Activated CD4-positive, alpha-beta memory T cell treated with anti-CD3 and anti-CD28 coated beads for 36 hours (primary cell): ENCODE measurements at regions of chr3 and their contacts with region 1.

Region 1: GRCh38 chr3:58358092-58358491 is 25.4 kb downstream of the PXK start:
- DNase-seq: peak; percentile 44
- H3K4me3 Mint-ChIP-seq: no peak overlapping the region
- H3K27ac Mint-ChIP-seq: no peak overlapping the region
- H3K4me1 Mint-ChIP-seq: peaks cover 34% of the 10 kb centered on the region
- H3K27me3 Mint-ChIP-seq: no peaks in the 10 kb centered on the region

Region 2: GRCh38 chr3:57832900-57833313 is 525.2 kb before region 1 on chr3:
- CTCF ChIA-PET with region 1: no interaction called
- POLR2A ChIA-PET with region 1: no interaction called
- intact Hi-C with region 1: no loop called
- DNase-seq: no peak
- H3K4me3 Mint-ChIP-seq: no peak overlapping the region
- H3K27ac Mint-ChIP-seq: no peak overlapping the region
- H3K4me1 Mint-ChIP-seq: no peaks in the 10 kb centered on the region
- H3K27me3 Mint-ChIP-seq: no peaks in the 10 kb centered on the region

Region 3: DNA sequence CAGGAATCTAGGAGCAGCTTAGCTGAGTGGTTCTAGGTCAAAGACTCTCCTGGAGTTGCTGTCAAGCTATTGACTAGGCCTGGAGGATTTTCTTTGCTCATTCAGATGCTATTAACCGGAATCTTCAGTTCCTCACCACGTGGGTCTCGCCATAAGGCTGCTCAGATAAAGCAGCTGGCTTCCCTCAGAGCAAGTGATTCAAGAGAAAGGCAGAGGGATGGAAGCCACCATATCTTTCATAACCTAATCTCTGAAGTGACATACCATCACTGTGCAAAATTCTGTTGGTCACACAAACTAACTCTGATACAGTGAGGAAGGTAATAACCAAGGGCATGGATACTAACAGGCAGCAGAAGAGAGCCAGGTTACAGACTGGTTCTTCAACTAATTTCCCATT is 422.6 kb before region 1 on chr3:
- CTCF ChIA-PET with region 1: no interaction called
- POLR2A ChIA-PET with region 1: no interaction called
- intact Hi-C with region 1: no loop called
- DNase-seq: no peak
- H3K4me3 Mint-ChIP-seq: no peak overlapping the region
- H3K27ac Mint-ChIP-seq: no peak overlapping the region
- H3K4me1 Mint-ChIP-seq: no peaks in the 10 kb centered on the region
- H3K27me3 Mint-ChIP-seq: no peaks in the 10 kb centered on the region

Region 4: DNA sequence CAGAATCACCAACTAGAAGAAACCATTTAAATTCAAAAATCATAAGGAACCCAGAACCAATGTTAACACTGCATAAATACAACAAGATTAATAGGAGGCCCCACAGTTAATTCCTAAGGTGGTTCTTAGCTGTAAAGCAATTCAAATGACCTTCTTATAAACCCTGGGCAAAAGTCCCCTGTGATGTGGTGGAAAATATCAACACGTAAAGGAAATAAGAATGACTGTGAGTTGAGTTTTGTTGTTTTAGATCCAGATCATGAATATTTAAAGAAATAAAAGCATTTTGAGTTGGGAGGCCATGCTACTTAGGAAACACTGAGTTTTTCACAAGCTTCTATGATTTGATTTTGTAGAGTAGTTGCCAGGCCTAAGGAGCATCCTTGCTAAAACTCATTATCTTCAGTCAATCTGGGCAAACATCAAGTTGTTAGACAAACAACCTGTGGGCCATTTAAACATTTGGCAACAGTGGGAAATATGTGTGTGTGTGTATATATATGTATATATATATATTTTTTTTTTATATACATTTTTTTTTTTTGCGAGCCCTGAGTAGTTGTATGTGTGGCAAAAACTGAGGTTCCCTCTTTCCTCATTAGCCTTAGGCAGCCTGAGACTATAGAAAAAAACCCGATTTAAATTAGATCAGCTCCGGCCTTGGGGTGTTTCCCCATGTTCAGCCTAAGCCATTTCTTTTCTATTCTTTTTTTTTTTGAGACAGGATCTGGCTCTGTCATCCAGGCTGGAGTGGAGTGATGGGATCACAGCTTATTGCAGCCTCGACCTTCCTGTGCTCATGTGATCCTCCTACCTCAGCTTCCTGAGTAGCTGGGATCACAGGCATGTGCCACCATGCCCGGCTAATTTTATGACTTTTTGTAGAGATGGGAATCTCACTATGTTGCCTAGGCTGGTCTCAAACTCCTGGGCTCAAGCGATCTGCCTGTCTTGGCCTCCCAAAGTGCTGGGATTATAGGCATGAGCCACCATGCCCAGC is 33.4 kb before region 1 on chr3:
- CTCF ChIA-PET with region 1: no interaction called
- POLR2A ChIA-PET with region 1: no interaction called
- intact Hi-C with region 1: loop called (anchors 1 kb)
- DNase-seq: no peak
- H3K4me3 Mint-ChIP-seq: peak overlapping the region; percentile 34
- H3K27ac Mint-ChIP-seq: peak overlapping the region; percentile 93
- H3K4me1 Mint-ChIP-seq: peaks cover 37% of the 10 kb centered on the region
- H3K27me3 Mint-ChIP-seq: no peaks in the 10 kb centered on the region